Right cardiac atrium (tissue), 5 donors: ENCODE measurements at regions of chr10 and their contacts with region 1.

Region 1: DNA sequence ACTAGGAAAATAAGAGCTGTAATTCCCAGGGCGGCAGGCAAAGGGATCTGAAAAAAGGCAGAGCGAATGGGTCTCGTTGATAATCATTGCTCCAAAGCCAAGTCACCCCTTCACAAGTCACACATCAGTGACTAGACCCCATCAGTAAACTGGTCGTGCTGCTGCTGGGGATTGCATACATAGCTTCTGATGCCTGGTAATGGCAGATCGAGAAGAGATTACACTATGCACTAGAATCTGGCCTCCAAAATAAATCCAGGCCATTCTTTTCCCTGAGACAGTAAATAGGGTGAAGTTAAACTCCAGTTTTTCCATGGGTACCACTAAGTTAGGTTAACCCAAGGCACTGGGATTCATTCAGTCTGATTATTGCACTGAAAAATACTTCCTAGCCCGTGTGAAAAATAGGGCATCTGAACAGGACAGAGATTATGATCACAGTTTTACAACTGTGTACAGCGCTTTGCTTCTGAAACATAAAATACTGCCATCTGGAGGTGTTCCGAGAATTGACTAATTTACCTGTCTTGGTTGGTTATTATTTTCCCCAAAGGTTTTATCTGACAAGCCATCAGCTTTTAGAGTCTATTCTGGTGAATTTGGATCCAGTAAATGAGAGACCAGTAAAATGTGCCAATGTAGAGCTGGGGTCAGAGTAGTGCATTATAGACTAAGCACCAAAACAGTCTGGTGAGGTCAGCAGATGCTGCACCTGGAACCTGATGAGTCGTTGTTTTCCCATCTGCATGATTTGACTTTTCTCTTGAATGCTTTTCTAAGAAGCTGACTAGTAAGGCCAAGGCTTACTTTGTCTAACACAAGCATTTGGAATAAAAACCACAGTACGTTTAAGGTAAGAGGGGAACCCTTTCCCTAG is 82.9 kb upstream of the AFAP1L2 start:
- DNase-seq: no peak
- ATAC-seq: no peak
- H3K4me3 ChIP-seq: no peak overlapping the region
- H3K27ac ChIP-seq: peak overlapping the region; percentile 48
- H3K4me1 ChIP-seq: peaks cover 19% of the 10 kb centered on the region
- H3K27me3 ChIP-seq: no peaks in the 10 kb centered on the region

Region 2: DNA sequence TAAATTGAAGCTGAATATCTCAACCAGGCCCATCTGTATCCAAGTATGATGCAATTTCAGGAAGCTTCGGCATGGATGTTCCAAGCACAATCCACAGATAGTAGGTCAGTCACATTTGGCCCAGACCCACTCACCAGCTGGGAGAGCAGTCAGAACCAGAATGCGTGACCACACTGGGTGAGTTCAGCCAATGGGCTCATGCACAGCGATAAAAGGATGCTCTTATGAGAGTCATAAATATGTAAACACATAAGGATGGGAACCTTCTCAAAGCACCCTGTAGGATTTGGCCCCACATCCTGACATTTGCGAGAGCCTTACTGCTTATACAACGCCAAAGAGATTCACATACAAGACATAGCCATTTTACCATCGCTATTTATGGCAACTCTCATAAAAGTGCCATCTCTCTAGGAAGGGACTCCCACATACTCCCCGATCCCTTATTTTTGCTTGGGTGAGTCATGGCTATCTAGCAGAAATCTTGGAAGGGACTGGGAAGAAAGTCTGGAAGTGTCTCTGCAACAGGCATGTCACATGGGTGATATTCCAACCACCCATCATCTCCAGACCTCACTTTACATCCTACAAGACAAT is 85.9 kb before region 1 on chr10:
- intact Hi-C with region 1: no loop called
- DNase-seq: peak; percentile 77 to 90 (median 81)
- ATAC-seq: peak; percentile 62 to 63
- H3K4me3 ChIP-seq: no peak overlapping the region
- H3K27ac ChIP-seq: no peak overlapping the region
- H3K4me1 ChIP-seq: no peaks in the 10 kb centered on the region
- H3K27me3 ChIP-seq: no peaks in the 10 kb centered on the region

Region 3: DNA sequence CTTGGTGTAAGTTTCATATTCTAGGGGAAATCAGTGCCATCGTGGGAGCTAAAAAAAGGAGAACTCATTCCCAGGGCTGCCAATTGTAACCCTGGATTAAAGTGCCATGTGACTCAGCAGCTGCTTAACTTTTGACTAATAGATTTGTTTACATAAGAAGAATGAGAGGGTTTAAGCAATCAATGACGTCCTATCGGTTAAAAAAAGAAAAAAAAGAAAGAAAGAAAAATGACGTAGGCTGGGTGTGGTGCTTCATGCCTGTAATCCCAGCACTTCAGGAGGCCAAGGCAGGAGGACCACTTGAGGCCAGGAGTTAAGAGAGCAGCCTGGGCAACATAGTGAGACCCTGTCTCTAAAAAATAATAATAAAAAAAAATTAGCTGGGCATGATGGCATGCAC is 33.3 kb after region 1 on chr10:
- intact Hi-C with region 1: loop called in 1 of 4 experiments (anchors 5 kb)
- DNase-seq: peak in 1 of 3 donors; percentile 44
- ATAC-seq: peak in 1 of 2 donors; percentile 41
- H3K4me3 ChIP-seq: no peak overlapping the region
- H3K27ac ChIP-seq: peak overlapping the region; percentile 23
- H3K4me1 ChIP-seq: peaks cover 17% of the 10 kb centered on the region
- H3K27me3 ChIP-seq: no peaks in the 10 kb centered on the region

Region 4: DNA sequence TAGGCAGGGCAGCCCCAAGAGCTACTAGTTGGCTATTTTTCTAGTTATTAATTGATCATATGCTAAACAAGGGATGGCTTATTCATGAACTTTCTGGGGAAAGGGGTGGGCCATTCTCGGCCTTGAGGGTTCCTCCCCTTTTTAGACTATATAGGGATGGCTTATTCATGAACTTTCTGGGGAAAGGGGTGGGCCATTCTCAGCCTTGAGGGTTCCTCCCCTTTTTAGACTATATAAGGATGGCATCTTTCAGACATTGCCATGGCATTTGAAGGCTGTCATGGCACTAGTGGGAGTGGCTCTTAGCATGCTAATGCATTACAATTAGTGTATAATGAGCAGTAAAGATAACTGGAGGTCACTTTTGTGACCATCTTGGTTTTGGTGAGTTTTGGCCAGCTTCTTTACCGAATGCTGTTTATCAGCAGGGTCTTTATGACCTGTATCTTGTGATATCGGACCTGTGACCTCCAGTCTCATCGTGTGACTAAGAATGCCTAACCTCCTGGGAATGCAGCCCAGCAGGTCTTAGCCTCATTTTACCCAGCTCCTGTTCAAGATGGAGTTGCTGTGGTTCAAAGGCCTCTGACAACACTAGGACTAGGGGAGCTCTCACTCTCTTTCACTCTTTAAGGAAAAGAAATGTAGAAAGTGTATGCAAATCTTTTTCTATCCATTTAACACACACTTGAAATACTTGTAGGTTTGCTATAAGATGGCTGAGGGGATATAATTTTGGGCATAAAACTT is 342.2 kb after region 1 on chr10:
- intact Hi-C with region 1: no loop called
- DNase-seq: no peak
- ATAC-seq: no peak
- H3K4me3 ChIP-seq: no peak overlapping the region
- H3K27ac ChIP-seq: no peak overlapping the region
- H3K4me1 ChIP-seq: peaks cover 5% of the 10 kb centered on the region
- H3K27me3 ChIP-seq: no peaks in the 10 kb centered on the region

Region 5: DNA sequence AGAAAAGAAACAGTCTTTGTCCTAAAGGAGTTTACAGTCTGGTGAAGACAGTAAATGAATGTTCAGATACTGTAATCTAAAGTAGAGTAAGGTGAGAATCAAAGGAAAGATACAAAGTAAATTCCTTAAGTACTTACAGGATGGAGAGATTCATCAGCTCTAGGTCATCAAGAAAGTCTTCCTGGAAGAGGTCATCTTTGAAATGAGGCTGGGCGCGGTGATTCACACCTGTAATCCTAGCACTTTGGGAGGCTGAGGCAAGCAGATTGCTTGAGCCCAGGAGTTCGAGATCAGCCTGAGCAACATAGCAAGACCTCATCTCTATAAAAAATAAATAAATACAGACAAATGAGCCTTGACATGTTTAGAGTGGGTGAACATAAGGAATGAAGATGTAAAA is 352.7 kb after region 1 on chr10:
- intact Hi-C with region 1: no loop called
- DNase-seq: no peak
- ATAC-seq: no peak
- H3K4me3 ChIP-seq: no peak overlapping the region
- H3K27ac ChIP-seq: no peak overlapping the region
- H3K4me1 ChIP-seq: no peaks in the 10 kb centered on the region
- H3K27me3 ChIP-seq: no peaks in the 10 kb centered on the region